Posterior vena cava (tissue), 2 donors: ENCODE measurements at regions of chr17 and their contacts with region 1.

Region 1: GRCh38 chr17:51817108-51817507 is 341.4 kb downstream of the CA10 start:
- DNase-seq: no peak

Region 2: DNA sequence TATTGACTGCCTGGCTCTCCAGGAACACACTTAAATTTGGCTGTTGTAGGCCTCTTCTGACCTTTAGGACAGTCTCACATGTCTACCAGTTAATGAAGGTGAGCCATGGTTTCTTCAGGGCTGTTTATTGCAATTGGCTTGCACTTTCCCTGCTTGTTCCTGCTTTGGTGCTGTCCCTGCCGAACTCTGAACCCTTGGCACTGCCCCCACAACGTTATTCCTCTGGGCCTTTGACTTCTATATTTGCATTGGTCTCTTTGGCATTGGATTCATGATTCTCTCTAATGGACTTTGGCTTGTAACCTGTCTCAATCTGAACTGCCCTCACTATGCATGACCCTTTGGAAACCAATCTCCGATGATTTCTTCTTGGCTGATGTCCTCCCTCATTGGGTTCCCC is 257.3 kb before region 1 on chr17:
- intact Hi-C with region 1: loop called in 1 of 2 experiments (anchors 2 kb)
- DNase-seq: no peak

Region 3: GRCh38 chr17:51860954-51861561 is 44.0 kb after region 1 on chr17:
- intact Hi-C with region 1: no loop called
- DNase-seq: no peak